Activated CD4-positive, alpha-beta memory T cell treated with anti-CD3 and anti-CD28 coated beads, Interleukin-2, amount 10 ng/mL, durations not matched to agents 7 days and 5 days (primary cell): ENCODE measurements at regions of chr17 and their contacts with region 1.

Region 1: GRCh38 chr17:50853015-50853615 is 13.0 kb downstream of the TOB1 start:
- DNase-seq: peak; percentile 12
- H3K4me3 Mint-ChIP-seq: no peak overlapping the region
- H3K27ac Mint-ChIP-seq: no peak overlapping the region
- H3K4me1 Mint-ChIP-seq: peaks cover 25% of the 10 kb centered on the region
- H3K27me3 Mint-ChIP-seq: peaks cover 14% of the 10 kb centered on the region

Region 2: GRCh38 chr17:50620858-50621257 is 232.3 kb before region 1 on chr17:
- CTCF ChIA-PET with region 1: no interaction called
- POLR2A ChIA-PET with region 1: no interaction called
- DNase-seq: no peak
- H3K4me3 Mint-ChIP-seq: no peak overlapping the region
- H3K27ac Mint-ChIP-seq: no peak overlapping the region
- H3K4me1 Mint-ChIP-seq: peaks cover 5% of the 10 kb centered on the region
- H3K27me3 Mint-ChIP-seq: peaks cover 5% of the 10 kb centered on the region

Region 3: DNA sequence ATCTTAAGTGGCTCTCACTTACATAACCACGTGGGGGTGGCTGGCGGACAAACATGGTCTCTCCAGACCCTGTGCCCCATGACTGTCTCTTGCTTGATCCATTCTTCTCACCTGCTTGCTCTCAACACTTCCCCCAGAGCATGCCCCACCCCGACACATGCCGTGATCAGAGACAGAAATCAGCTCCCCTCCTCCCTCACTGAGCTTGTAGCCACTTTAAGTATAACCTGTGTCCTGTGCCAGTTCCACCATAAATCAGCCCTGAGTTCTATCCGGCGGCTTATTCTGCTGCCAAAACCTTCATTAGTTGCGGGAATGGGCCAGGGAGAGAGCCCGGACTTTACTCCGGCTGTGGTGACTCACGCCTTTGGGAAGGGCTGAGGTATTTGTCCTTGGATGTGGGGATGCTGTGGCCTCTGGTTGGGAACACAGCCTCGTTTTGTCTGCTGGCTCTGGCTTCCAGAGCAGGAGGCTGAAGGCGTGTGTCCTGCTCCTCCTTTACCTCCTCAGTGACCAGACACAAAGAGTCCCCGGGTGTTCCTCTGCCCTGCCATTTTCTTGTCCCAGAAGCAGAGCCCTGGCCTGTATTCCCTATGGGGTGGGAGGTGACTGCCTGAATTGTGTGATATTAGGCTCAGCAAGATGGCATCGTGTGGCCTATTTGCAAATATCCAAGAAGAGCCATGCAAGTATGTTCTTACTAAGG is 166.5 kb before region 1 on chr17:
- CTCF ChIA-PET with region 1: no interaction called
- POLR2A ChIA-PET with region 1: no interaction called
- DNase-seq: no peak
- H3K4me3 Mint-ChIP-seq: no peak overlapping the region
- H3K27ac Mint-ChIP-seq: no peak overlapping the region
- H3K4me1 Mint-ChIP-seq: peaks cover 3% of the 10 kb centered on the region
- H3K27me3 Mint-ChIP-seq: peaks cover 10% of the 10 kb centered on the region

Region 4: GRCh38 chr17:50783193-50783660 is 69.9 kb before region 1 on chr17:
- CTCF ChIA-PET with region 1: interaction called, 18 read pairs
- POLR2A ChIA-PET with region 1: interaction called, 3 read pairs
- DNase-seq: peak; percentile 82
- H3K4me3 Mint-ChIP-seq: no peak overlapping the region
- H3K27ac Mint-ChIP-seq: no peak overlapping the region
- H3K4me1 Mint-ChIP-seq: peaks cover 30% of the 10 kb centered on the region
- H3K27me3 Mint-ChIP-seq: peaks cover 38% of the 10 kb centered on the region

Region 5: DNA sequence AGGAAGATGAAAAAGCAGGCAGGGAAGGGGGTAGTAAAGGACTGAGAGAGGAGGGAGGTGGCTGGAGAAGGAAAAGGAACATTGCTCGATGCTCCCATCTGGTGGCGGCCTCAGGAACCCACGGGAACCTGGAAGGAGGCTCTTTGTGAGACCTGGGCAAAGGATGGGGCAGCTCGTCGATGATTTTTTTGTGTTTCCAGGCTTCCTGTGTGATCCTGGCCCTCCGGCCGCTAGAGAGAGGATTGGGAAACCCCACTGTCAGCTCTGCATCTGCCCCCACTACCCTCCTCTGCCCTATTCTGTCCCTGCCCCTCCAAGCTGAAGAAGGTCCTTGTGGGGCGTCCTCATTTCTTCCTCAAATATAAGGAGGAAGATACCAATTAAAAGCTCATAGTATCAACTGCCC is 11.2 kb before region 1 on chr17:
- CTCF ChIA-PET with region 1: interaction called, 23 read pairs
- POLR2A ChIA-PET with region 1: interaction called, 6 read pairs
- DNase-seq: peak; percentile 65
- H3K4me3 Mint-ChIP-seq: no peak overlapping the region
- H3K27ac Mint-ChIP-seq: no peak overlapping the region
- H3K4me1 Mint-ChIP-seq: no peaks in the 10 kb centered on the region
- H3K27me3 Mint-ChIP-seq: no peaks in the 10 kb centered on the region

Region 6: GRCh38 chr17:50944054-50944901 is 91.2 kb after region 1 on chr17:
- CTCF ChIA-PET with region 1: interaction called, 189 read pairs
- POLR2A ChIA-PET with region 1: interaction called, 457 read pairs
- DNase-seq: peak; percentile 90
- H3K4me3 Mint-ChIP-seq: peak overlapping the region; percentile 74
- H3K27ac Mint-ChIP-seq: peak overlapping the region; percentile 75
- H3K4me1 Mint-ChIP-seq: peaks cover 42% of the 10 kb centered on the region
- H3K27me3 Mint-ChIP-seq: no peaks in the 10 kb centered on the region

Region 7: GRCh38 chr17:50956750-50957523 is 103.8 kb after region 1 on chr17:
- CTCF ChIA-PET with region 1: interaction called, 189 read pairs
- POLR2A ChIA-PET with region 1: interaction called, 457 read pairs
- DNase-seq: peak; percentile 73
- H3K4me3 Mint-ChIP-seq: no peak overlapping the region
- H3K27ac Mint-ChIP-seq: peak overlapping the region; percentile 59
- H3K4me1 Mint-ChIP-seq: peaks cover 15% of the 10 kb centered on the region
- H3K27me3 Mint-ChIP-seq: no peaks in the 10 kb centered on the region

Region 8: DNA sequence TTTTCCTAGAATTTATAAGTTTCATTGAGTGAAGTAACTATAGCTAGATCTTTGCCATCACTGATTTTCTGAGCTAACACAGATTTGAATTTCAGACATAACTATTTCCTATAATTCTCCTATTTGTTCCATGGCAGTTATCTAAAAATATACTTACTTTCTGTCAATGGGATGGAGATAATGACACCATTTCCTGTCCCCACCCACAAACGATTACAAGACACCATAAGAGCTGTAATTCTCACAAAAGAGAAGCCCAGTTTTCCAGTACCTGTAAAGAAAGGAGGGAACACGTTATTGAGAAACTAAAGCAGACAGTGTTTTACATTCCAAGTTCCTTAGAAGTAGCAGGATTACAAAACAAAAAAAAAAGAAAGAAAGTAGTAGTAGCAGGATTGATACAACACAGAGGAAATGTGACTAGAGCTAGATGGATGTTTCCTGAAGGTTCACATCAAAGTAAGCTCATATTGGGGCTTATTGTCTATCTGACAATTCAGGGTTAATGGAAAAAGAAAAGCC is 123.9 kb after region 1 on chr17:
- CTCF ChIA-PET with region 1: interaction called, 10 read pairs
- POLR2A ChIA-PET with region 1: no interaction called
- DNase-seq: no peak
- H3K4me3 Mint-ChIP-seq: no peak overlapping the region
- H3K27ac Mint-ChIP-seq: peak overlapping the region; percentile 83
- H3K4me1 Mint-ChIP-seq: peaks cover 24% of the 10 kb centered on the region
- H3K27me3 Mint-ChIP-seq: no peaks in the 10 kb centered on the region

Region 9: GRCh38 chr17:51016099-51016498 is 163.0 kb after region 1 on chr17:
- CTCF ChIA-PET with region 1: no interaction called
- POLR2A ChIA-PET with region 1: no interaction called
- DNase-seq: no peak
- H3K4me3 Mint-ChIP-seq: no peak overlapping the region
- H3K27ac Mint-ChIP-seq: no peak overlapping the region
- H3K4me1 Mint-ChIP-seq: peaks cover 3% of the 10 kb centered on the region
- H3K27me3 Mint-ChIP-seq: no peaks in the 10 kb centered on the region

Region 10: DNA sequence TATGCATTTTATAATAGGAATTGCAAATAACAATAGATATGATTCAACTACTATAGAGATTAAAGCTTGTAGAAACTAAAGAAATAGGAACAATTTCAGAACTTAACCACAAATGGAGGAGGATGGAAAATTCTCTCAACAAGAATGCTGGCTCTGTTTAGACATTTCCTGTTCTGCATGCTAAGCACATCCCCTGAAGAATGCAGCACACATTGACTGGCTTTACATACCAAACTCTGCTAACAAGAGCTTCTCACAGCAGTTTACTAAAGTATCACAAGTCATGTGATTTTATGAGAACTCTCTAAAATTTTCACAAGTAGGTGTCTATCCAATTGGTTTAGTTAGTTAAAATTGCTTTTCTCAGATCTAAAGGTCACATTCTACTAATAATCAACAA is 182.3 kb after region 1 on chr17:
- CTCF ChIA-PET with region 1: no interaction called
- POLR2A ChIA-PET with region 1: no interaction called
- DNase-seq: no peak
- H3K4me3 Mint-ChIP-seq: no peak overlapping the region
- H3K27ac Mint-ChIP-seq: no peak overlapping the region
- H3K4me1 Mint-ChIP-seq: peaks cover 5% of the 10 kb centered on the region
- H3K27me3 Mint-ChIP-seq: no peaks in the 10 kb centered on the region